Stomach (tissue), 19 donors: ENCODE measurements at regions of chr11 and their contacts with region 1.

Region 1: GRCh38 chr11:69642913-69643632 is 2.1 kb downstream of the CCND1 start:
- DNase-seq: peak; percentile 85 to 95
- H3K4me3 ChIP-seq: peak overlapping the region; percentile 73 to 89 (median 87)
- H3K27ac ChIP-seq: peak overlapping the region; percentile 84 to 92 (median 87)
- H3K4me1 ChIP-seq: peaks cover 59 to 73% (median 71%) of the 10 kb centered on the region in 4 donors
- H3K27me3 ChIP-seq: peaks cover 0 to 78% (median 37%) of the 10 kb centered on the region in 3 donors
- CTCF ChIP-seq: peak in 5 of 7 experiments; percentile 71 to 95 (median 87)
- EP300 ChIP-seq: no peak
- POLR2A ChIP-seq: no peak

Region 2: GRCh38 chr11:69101115-69101791 is 541.8 kb before region 1 on chr11:
- intact Hi-C with region 1: loop called (anchors 5 kb)
- DNase-seq: peak; percentile 87 to 93
- H3K4me3 ChIP-seq: no peak overlapping the region
- H3K27ac ChIP-seq: no peak overlapping the region
- H3K4me1 ChIP-seq: peaks cover 3 to 32% (median 20%) of the 10 kb centered on the region in 4 donors
- H3K27me3 ChIP-seq: peaks cover 0 to 14% (median 0%) of the 10 kb centered on the region in 3 donors
- CTCF ChIP-seq: peak in 6 of 7 experiments; percentile 85 to 99 (median 98)
- EP300 ChIP-seq: no peak
- POLR2A ChIP-seq: no peak

Region 3: GRCh38 chr11:69280994-69281393 is 362.1 kb before region 1 on chr11:
- intact Hi-C with region 1: loop called (anchors 10 kb)
- DNase-seq: peak; percentile 52 to 69
- H3K4me3 ChIP-seq: no peak overlapping the region
- H3K27ac ChIP-seq: peak overlapping the region in 3 of 5 donors; percentile 39 to 77 (median 55)
- H3K4me1 ChIP-seq: peaks cover 15 to 28% (median 18%) of the 10 kb centered on the region in 4 donors
- H3K27me3 ChIP-seq: peaks cover 0 to 12% (median 0%) of the 10 kb centered on the region in 3 donors
- CTCF ChIP-seq: no peak
- EP300 ChIP-seq: no peak
- POLR2A ChIP-seq: no peak

Region 4: GRCh38 chr11:70128435-70128906 is 485.4 kb after region 1 on chr11:
- intact Hi-C with region 1: no loop called
- DNase-seq: peak; percentile 40 to 74
- H3K4me3 ChIP-seq: no peak overlapping the region
- H3K27ac ChIP-seq: peak overlapping the region in 3 of 5 donors; percentile 9 to 42 (median 38)
- H3K4me1 ChIP-seq: peaks cover 6 to 16% (median 13%) of the 10 kb centered on the region in 4 donors
- H3K27me3 ChIP-seq: no peaks in the 10 kb centered on the region
- CTCF ChIP-seq: no peak
- EP300 ChIP-seq: no peak
- POLR2A ChIP-seq: no peak